AG04449 (cell line): ENCODE measurements at regions of chr3 and their contacts with region 1.

Region 1: GRCh38 chr3:107927361-107928083 is 163.3 kb downstream of the CD47 start:
- DNase-seq: no peak
- H3K4me3 ChIP-seq: peak overlapping the region; percentile 67
- CTCF ChIP-seq: peak; percentile 96

Region 2: DNA sequence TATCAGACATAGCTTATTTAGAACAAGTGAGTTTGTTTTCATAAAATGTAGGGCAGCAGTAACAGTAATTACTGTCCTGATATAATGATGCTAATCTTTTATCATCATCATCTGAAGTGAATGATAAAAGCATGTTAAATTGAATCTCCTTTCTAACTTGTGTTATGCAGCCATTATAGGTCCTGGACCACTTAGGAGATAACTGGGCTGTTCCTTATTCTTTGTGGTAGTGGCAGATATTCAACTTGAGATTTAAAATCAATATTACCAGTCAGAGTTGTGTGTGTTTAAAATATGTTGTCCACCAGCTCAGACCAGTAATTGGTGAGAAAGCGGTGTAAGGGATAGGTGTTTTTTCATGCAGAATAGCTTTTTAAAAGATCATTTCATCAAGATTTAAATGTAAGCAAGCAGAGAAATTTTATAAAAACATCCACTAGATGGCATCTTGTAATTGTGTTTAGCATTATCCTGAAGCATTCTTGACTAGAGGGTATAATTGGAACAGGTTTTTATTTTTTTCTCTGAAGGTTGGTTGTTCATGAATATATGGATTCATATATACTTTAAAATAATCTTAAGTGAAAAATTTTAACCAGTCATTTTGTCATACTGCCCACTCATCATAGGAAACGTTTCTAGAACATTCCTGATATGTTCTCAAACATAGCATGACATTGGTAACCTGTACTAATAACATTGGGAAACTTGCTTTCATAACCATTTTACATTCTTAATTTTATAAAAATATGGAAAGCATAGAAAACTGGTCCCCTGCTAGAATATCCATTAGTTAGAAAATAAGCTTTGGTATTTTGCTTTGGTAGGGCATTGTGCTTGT is 250.8 kb before region 1 on chr3:
- CTCF ChIA-PET with region 1: interaction called, 19 read pairs
- POLR2A ChIA-PET with region 1: no interaction called
- DNase-seq: no peak
- H3K4me3 ChIP-seq: no peak overlapping the region
- CTCF ChIP-seq: peak; percentile 29

Region 3: GRCh38 chr3:107825601-107826000 is 101.9 kb before region 1 on chr3:
- CTCF ChIA-PET with region 1: no interaction called
- POLR2A ChIA-PET with region 1: no interaction called
- DNase-seq: no peak
- H3K4me3 ChIP-seq: no peak overlapping the region
- CTCF ChIP-seq: no peak

Region 4: DNA sequence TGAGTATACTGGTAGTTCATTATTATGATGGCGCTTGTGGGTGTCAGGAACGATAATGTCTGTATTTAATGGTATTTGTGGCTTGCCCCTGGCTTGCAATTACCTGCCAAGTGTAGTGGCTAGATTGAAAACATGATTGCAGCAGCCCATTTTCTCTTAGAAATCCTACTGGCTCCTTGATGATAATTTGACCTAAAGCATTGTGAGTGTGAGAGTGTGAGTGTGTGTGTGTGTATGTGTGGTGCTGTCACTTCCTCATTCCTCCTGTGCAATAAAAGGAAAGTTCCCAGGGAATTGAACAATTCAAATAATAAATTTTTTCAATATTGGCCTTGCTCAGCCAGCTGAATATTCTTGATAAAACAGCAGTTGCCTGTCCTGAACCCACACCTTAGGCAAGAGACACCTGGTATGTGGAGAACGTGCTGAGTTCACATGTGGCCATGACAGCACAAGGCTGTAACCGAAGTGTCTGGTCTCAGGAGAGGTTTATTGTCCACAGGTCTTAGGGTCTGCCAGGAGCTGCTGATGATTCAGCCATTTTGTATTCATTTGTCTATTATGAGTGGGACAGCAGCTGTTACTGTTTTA is 30.0 kb before region 1 on chr3:
- CTCF ChIA-PET with region 1: interaction called, 12 read pairs
- POLR2A ChIA-PET with region 1: no interaction called
- DNase-seq: no peak
- H3K4me3 ChIP-seq: no peak overlapping the region
- CTCF ChIP-seq: no peak

Region 5: GRCh38 chr3:107916166-107916565 is 11.4 kb before region 1 on chr3:
- CTCF ChIA-PET with region 1: interaction called, 26 read pairs
- POLR2A ChIA-PET with region 1: no interaction called
- DNase-seq: no peak
- H3K4me3 ChIP-seq: no peak overlapping the region
- CTCF ChIP-seq: no peak

Region 6: GRCh38 chr3:107949394-107949970 is 22.0 kb after region 1 on chr3:
- CTCF ChIA-PET with region 1: interaction called, 80 read pairs
- POLR2A ChIA-PET with region 1: no interaction called
- DNase-seq: no peak
- H3K4me3 ChIP-seq: no peak overlapping the region
- CTCF ChIP-seq: no peak

Region 7: GRCh38 chr3:108477511-108478147 is 550.1 kb after region 1 on chr3:
- CTCF ChIA-PET with region 1: interaction called, 21 read pairs
- POLR2A ChIA-PET with region 1: no interaction called
- DNase-seq: no peak
- H3K4me3 ChIP-seq: no peak overlapping the region
- CTCF ChIP-seq: peak; percentile 64